HCT116 (cell line): ENCODE measurements at regions of chr14 and their contacts with region 1.

Region 1: DNA sequence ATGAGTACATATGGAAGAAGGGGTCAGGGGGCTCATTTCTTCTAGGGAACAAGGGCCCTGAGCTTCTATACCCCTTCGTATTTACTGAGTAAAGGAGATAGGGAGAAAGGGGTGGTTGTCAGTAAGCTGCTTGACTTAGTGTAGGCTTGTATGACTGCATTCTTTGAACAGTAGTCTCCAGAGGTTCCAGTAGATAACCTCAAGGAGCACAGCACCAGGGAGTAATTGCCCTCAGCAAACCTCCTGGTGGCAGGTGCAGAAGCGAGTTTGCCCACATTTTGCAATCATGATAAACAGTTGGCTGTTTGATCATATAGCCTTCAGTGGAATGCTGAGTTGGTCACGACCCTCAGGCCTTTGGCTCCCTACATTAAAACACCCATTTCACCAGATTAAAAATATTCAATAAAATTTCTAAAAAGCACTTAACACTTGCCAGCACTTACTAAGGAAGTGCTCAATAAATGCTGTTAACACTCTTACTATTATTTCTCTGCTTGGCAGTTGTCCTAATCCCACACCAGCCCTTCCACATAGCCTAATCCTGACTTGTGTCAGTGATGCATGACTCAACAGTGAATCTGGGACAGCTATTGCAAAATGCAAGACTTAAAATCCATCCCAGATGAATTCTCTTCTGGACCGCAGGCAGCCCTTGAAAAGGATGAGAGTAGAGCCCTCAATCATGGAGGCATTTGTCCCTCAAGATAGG is 3.7 kb upstream of the DHRS4L2 start:
- DNase-seq: no peak
- ATAC-seq: no peak
- H3K4me3 ChIP-seq: no peak overlapping the region
- H3K27ac ChIP-seq: no peak overlapping the region
- H3K4me1 ChIP-seq: peaks cover 3 to 19% of the 10 kb centered on the region in 2 experiments; a peak in 3 of 4 replicates
- H3K27me3 ChIP-seq: no peaks in the 10 kb centered on the region
- CTCF ChIP-seq: no peak
- POLR2A ChIP-seq: no peak
- RAD21 ChIP-seq: no peak

Region 2: DNA sequence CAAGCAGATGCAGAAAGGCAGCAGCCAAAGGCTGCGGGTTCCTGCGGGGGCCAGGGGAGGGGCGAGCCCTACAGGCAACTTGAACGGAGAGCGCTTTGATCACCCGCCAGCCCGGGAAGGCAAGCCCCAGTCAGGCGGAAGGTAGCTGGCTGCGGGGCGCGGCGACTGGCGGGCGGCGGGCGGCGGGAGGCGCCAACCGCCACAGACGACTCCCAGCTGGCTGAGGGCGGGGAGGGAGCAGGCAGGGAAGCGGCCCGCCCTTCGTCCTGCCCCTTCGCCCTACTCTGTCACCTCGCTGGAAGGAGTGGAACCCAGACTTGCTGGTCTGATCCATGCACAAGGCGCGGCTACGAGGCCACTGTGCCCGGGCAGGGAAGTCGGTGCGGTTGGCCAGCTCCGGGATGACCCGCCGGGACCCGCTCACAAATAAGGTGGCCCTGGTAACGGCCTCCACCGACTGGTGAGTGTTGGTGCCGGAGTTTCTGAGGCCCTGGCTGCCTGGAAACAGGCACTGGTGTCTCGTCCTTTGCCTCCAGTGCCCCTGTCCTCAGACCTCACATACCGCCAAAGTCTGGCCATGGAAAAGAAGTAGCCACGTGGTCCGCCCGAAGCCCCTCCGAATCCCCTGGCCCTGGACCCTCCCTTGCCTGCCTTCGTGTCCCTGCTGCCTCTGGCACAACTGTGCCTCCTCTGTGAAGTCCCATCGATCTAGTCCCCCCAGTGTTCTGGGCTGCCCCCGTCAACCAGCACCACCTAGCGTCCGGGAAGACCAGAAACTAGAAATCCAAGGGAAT is 51.3 kb after region 1 on chr14:
- CTCF ChIA-PET with region 1: no interaction called
- POLR2A ChIA-PET with region 1: no interaction called
- RAD21 ChIA-PET with region 1: no interaction called
- intact Hi-C with region 1: loop called (anchors 5 kb)
- DNase-seq: peak; percentile 65
- ATAC-seq: peak; percentile 91
- H3K4me3 ChIP-seq: peak overlapping the region; percentile 63 to 70
- H3K27ac ChIP-seq: peak overlapping the region; percentile 94
- H3K4me1 ChIP-seq: peaks cover 11 to 26% of the 10 kb centered on the region in 2 experiments; a peak in 3 of 4 replicates
- H3K27me3 ChIP-seq: no peaks in the 10 kb centered on the region
- CTCF ChIP-seq: peak; percentile 50 to 88 (median 79); a peak in 5 of 6 replicates
- POLR2A ChIP-seq: peak; percentile 72
- RAD21 ChIP-seq: peak; percentile 54